ENCODE measurements at regions of chr3 and their contacts with region 1.

Region 1: GRCh38 chr3:169744366-169745054 is 20.4 kb downstream of the TERC start:
- DNase-seq: no peak
- ATAC-seq: peak; percentile 39 to 47
- H3K4me3 ChIP-seq: no peak overlapping the region
- H3K27ac ChIP-seq: no peak overlapping the region
- H3K4me1 ChIP-seq: no peaks in the 10 kb centered on the region
- H3K27me3 ChIP-seq: peaks cover 3% of the 10 kb centered on the region

Region 2: DNA sequence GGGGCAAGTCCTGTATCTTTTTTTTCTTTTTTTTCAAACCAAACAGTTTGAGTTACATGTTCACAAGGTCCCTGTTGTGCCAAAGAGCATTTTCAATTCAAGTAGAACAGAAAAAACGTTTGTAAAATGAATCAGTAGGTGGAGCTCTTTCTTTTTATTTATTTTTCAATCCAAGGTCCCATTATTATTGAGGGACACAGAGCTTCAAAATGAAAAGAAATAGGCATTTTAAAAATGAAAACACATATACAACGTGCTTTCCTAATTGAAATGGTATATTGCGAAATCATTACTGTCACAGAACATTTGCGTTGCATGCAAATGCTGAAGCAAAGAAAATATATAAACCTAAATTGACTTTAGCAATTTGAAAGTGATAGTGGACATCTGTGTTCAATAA is 792.0 kb before region 1 on chr3:
- intact Hi-C with region 1: loop called in 1 of 4 experiments (anchors 10 kb)
- DNase-seq: no peak
- ATAC-seq: no peak
- H3K4me3 ChIP-seq: no peak overlapping the region
- H3K27ac ChIP-seq: no peak overlapping the region
- H3K4me1 ChIP-seq: no peaks in the 10 kb centered on the region
- H3K27me3 ChIP-seq: no peaks in the 10 kb centered on the region

Region 3: GRCh38 chr3:169133178-169134161 is 611.0 kb before region 1 on chr3:
- intact Hi-C with region 1: loop called in 1 of 4 experiments (anchors 10 kb)
- DNase-seq: no peak
- ATAC-seq: peak in 1 of 2 donors; percentile 73
- H3K4me3 ChIP-seq: no peak overlapping the region
- H3K27ac ChIP-seq: no peak overlapping the region
- H3K4me1 ChIP-seq: no peaks in the 10 kb centered on the region
- H3K27me3 ChIP-seq: no peaks in the 10 kb centered on the region

Region 4: GRCh38 chr3:169149349-169149890 is 595.1 kb before region 1 on chr3:
- intact Hi-C with region 1: loop called in 2 of 4 experiments (anchors 10 kb)
- DNase-seq: peak; percentile 86 to 94 (median 93)
- ATAC-seq: peak; percentile 84
- H3K4me3 ChIP-seq: peak overlapping the region; percentile 36
- H3K27ac ChIP-seq: peak overlapping the region; percentile 93
- H3K4me1 ChIP-seq: no peaks in the 10 kb centered on the region
- H3K27me3 ChIP-seq: no peaks in the 10 kb centered on the region

Measured in right cardiac atrium (tissue), 5 donors.